Ovary (tissue), 10 donors: ENCODE measurements at regions of chr2 and their contacts with region 1.

Region 1: DNA sequence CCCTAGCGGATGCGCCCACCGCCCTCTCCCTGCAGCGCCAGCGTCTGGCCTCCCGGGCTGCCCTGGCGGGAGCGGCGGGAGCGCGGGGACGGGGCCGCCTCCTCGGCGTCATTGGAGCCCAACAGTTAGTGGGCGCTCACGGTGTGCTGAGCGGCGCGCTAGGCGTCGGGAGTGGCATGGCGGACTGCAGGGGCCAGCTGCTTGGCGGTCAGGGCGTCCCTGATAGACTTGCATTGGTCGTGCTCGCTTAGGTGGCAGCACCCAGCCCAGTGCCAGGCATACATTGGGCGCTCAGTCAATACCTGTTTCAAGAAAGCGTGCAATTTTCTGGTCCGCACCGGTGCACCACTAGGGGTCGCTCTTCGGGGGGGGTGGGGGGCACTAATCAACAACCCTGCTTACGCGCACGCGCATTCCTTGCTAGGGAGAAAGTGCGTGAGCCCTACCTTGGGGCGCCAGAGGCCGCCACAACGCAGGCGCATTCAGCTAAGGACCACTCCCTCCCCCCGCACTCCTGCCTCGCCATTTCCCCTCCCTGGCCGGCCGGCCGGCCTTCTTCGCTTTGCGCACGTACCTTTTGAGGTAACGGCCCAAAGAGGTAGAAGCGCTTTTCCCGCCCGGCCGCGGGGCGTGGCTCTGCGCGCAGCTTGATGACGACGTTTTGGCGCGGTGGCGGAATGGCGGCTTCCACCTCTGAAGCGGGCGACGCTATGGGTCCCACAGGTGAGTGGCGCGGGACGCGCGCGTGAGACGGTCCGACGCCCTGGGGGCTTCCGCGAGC is 411 bp upstream of the MZT2A start:
- DNase-seq: peak; percentile 90 to 95 (median 92)
- H3K4me3 ChIP-seq: peak overlapping the region; percentile 97
- H3K27ac ChIP-seq: peak overlapping the region; percentile 58 to 85
- H3K4me1 ChIP-seq: no peaks in the 10 kb centered on the region
- H3K27me3 ChIP-seq: no peaks in the 10 kb centered on the region
- CTCF ChIP-seq: peak; percentile 25 to 86 (median 63)
- EP300 ChIP-seq: no peak
- POLR2A ChIP-seq: peak; percentile 39

Region 2: DNA sequence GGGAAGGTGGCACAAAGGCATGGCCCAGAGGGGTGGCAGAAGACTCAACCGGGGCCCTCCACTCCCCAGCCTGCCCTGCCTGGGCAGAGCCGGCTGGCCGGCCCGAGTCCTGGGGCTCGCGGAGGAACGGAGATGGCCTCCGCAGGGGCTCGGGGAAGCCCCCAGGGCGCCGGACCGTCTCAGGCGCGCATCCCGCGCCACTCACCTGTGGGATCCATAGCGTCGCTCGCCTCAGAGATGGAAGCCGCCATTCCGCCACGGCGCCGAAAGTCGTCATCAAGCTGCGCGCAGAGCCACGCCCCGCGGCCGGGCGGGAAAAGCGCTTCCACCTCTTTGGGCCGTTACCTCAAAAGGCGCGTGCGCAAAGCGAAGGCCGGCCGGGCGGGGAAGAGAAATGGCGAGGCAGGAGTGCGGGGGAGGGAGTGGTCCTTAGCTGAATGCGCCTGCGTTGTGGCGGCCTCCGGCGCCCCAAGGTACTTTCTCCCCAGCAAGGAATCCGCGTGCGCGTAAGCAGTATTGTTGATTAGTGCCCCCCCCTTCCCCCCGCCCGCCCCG is 1311.2 kb before region 1 on chr2 and contains the start of gene SMPD4:
- intact Hi-C with region 1: loop called in 1 of 4 experiments (anchors 5 kb)
- DNase-seq: peak; percentile 98 to 99 (median 98)
- H3K4me3 ChIP-seq: peak within 1 kb of the TSS; percentile 96
- H3K27ac ChIP-seq: peak within 1 kb of the TSS; percentile 87 to 91
- H3K4me1 ChIP-seq: peaks cover 7% of the 10 kb centered on the region
- H3K27me3 ChIP-seq: no peaks in the 10 kb centered on the region
- CTCF ChIP-seq: no peak
- EP300 ChIP-seq: no peak
- POLR2A ChIP-seq: peak; percentile 26
- total RNA-seq, gene SMPD4: 24.7 to 53.2 (median 39.5) TPM

Region 3: DNA sequence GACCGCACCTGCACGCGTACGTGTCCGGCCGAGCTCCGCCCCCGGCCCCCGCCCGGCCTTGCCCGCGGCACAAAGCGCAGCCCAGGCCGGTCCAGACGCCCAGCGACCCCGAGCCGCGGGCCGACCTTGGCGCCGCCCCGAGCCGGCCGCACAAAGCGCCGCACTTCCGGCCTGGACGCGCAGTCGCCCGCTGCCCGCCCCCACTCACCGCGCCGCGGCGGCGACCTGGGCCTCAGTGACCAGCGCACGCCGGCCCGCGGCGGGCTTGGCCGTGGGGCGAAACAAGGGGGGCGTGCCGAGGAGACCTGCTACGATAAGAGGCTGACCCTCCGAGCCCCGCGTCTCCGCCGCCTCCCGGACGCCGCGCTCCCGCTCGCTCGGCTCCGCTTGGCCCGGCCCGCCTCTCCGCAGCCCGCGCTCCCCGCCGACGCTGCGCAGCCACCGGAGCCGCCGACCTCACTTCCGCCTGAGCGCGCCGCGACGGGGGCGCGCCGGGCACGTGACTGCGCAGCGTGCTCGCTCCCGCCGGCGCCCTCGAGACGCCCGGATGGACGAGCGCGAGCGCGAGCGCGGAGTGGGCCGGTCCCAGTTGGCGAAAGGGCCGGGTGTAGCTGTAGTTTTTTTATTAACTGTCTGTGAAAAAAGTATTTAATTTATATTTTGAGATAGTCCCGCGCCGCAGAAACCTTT is 399.5 kb before region 1 on chr2 and contains the start of gene FAM168B:
- intact Hi-C with region 1: no loop called
- DNase-seq: peak; percentile 85 to 94 (median 89)
- H3K4me3 ChIP-seq: peak within 1 kb of the TSS; percentile 88
- H3K27ac ChIP-seq: peak within 1 kb of the TSS; percentile 95 to 99
- H3K4me1 ChIP-seq: no peaks in the 10 kb centered on the region
- H3K27me3 ChIP-seq: no peaks in the 10 kb centered on the region
- CTCF ChIP-seq: peak in 1 of 3 donors; percentile 15
- EP300 ChIP-seq: no peak
- POLR2A ChIP-seq: peak; percentile 96
- total RNA-seq, gene FAM168B: 66.3 to 117 (median 108) TPM

Region 4: GRCh38 chr2:131105156-131105949 is 387.3 kb before region 1 on chr2 and contains the start of gene PLEKHB2:
- intact Hi-C with region 1: loop called in 1 of 4 experiments (anchors 5 kb)
- DNase-seq: peak; percentile 89 to 96 (median 93)
- H3K4me3 ChIP-seq: peak within 1 kb of the TSS; percentile 88
- H3K27ac ChIP-seq: peak within 1 kb of the TSS; percentile 79 to 87
- H3K4me1 ChIP-seq: peaks cover 2% of the 10 kb centered on the region
- H3K27me3 ChIP-seq: no peaks in the 10 kb centered on the region
- CTCF ChIP-seq: peak in 2 of 3 donors; percentile 13 to 25
- EP300 ChIP-seq: no peak
- POLR2A ChIP-seq: peak; percentile 83
- total RNA-seq, gene PLEKHB2: 13.1 to 46.2 (median 23.4) TPM

Region 5: DNA sequence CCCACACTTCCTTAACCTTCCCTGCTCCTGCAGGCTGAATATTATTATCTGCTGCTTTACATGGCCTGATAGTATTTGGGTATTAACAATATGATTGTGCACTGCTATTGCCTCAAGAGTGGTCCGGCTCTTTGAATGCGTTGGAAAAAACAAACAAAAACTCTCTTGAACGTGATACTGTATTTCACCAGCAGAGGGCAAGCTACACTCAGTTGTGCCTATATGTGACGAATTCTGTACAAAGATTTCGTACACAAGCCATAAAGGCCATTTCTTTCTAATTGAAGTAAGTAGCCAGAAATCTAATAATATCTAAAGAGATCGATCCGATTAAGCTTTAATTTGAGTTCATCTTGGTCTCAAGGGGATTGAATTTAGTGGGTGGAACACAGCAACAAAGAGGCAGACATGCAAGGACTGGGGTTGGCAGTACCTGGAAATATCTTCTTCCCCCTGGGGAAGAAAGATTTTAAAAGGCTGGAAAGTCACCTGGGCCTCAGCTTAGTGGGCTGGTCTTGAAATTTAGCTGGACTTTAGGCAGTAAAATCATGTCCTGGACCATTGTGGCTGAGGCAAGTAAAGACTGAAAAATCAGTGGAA is 79.4 kb before region 1 on chr2:
- intact Hi-C with region 1: loop called in 1 of 4 experiments (anchors 10 kb)
- DNase-seq: peak in 1 of 5 donors; percentile 28
- H3K4me3 ChIP-seq: no peak overlapping the region
- H3K27ac ChIP-seq: no peak overlapping the region
- H3K4me1 ChIP-seq: no peaks in the 10 kb centered on the region
- H3K27me3 ChIP-seq: no peaks in the 10 kb centered on the region
- CTCF ChIP-seq: peak; percentile 52 to 76 (median 63)
- EP300 ChIP-seq: no peak
- POLR2A ChIP-seq: no peak

Region 6: DNA sequence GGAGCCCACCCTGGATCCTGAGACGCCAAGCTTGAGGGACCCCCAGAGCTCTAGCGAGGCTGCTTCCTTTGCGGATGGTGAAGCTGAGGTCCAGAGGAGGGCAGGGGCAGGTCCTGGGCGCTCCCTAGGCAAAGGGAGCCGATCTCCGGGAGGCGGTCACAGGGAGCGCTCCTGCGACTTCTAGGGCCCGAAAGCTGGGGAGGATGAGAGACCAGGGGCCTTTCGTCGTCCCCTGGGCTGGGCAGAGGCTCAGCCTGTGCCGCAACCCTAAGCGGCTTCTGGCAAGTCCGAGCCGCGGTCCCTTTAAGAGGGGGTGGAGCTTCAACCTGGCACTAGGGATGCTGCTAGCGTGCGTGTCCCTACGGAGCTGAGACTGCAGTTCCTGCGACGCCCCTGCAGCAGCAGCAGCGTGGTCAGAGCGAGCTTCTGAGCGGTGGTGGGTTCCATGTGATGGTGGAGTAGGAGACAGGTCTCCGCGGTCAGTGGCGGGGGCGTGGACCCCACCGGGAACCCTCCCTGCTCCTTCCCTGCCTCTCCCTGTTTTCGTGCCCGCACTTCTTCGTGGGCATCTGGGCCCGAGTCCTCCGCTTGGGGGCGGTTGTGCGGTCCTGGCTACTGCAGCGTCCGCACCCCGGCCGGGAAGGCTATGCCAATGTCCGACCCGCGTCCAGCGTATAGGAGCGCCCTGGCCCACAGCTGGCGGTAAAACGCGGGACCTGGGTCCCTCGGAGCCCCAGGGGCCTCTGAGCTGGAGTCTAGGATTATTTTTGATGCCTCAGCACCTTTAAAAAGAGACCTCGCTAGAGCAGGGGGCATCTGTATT is 189.7 kb after region 1 on chr2:
- intact Hi-C with region 1: loop called in 1 of 4 experiments (anchors 5 kb)
- DNase-seq: peak; percentile 81 to 85 (median 83)
- H3K4me3 ChIP-seq: peak overlapping the region; percentile 49
- H3K27ac ChIP-seq: peak overlapping the region; percentile 56 to 75
- H3K4me1 ChIP-seq: no peaks in the 10 kb centered on the region
- H3K27me3 ChIP-seq: no peaks in the 10 kb centered on the region
- CTCF ChIP-seq: peak in 1 of 3 donors; percentile 23
- EP300 ChIP-seq: no peak
- POLR2A ChIP-seq: no peak